K562 (cell line): ENCODE measurements at regions of chr4 and their contacts with region 1.

Region 1: GRCh38 chr4:147866532-147867271 is 134.8 kb downstream of the ARHGAP10 start:
- DNase-seq: peak; percentile 72 to 90 (median 82)
- ATAC-seq: peak; percentile 100
- H3K4me3 ChIP-seq: no peak overlapping the region
- H3K27ac ChIP-seq: no peak overlapping the region
- H3K4me1 ChIP-seq: no peaks in the 10 kb centered on the region
- H3K27me3 ChIP-seq: no peaks in the 10 kb centered on the region
- CTCF ChIP-seq: peak; percentile 98 to 100 (median 100)
- EP300 ChIP-seq: no peak
- POLR2A ChIP-seq: no peak
- RAD21 ChIP-seq: peak; percentile 92

Region 2: GRCh38 chr4:146883070-146883469 is 983.6 kb before region 1 on chr4:
- CTCF ChIA-PET with region 1: no interaction called
- POLR2A ChIA-PET with region 1: no interaction called
- in situ Hi-C with region 1: no loop called
- intact Hi-C with region 1: no loop called
- DNase-seq: no peak
- ATAC-seq: no peak
- H3K4me3 ChIP-seq: no peak overlapping the region
- H3K27ac ChIP-seq: no peak overlapping the region
- H3K4me1 ChIP-seq: no peaks in the 10 kb centered on the region
- H3K27me3 ChIP-seq: no peaks in the 10 kb centered on the region
- CTCF ChIP-seq: no peak
- EP300 ChIP-seq: no peak
- POLR2A ChIP-seq: no peak
- RAD21 ChIP-seq: no peak

Region 3: GRCh38 chr4:147019061-147019460 is 847.6 kb before region 1 on chr4:
- CTCF ChIA-PET with region 1: interaction called, 9 read pairs
- POLR2A ChIA-PET with region 1: no interaction called
- in situ Hi-C with region 1: loop called (anchors 25 kb)
- intact Hi-C with region 1: loop called (anchors 1 kb)
- DNase-seq: peak; percentile 43 to 68 (median 55)
- ATAC-seq: peak; percentile 91
- H3K4me3 ChIP-seq: no peak overlapping the region
- H3K27ac ChIP-seq: no peak overlapping the region
- H3K4me1 ChIP-seq: no peaks in the 10 kb centered on the region
- H3K27me3 ChIP-seq: no peaks in the 10 kb centered on the region
- CTCF ChIP-seq: peak; percentile 64 to 72 (median 68)
- EP300 ChIP-seq: no peak
- POLR2A ChIP-seq: no peak
- RAD21 ChIP-seq: peak; percentile 58 to 70

Region 4: GRCh38 chr4:147160908-147161513 is 705.7 kb before region 1 on chr4:
- CTCF ChIA-PET with region 1: interaction called, 7 read pairs
- POLR2A ChIA-PET with region 1: no interaction called
- in situ Hi-C with region 1: no loop called
- intact Hi-C with region 1: loop called (anchors 5 kb)
- DNase-seq: peak; percentile 43 to 53 (median 52)
- ATAC-seq: peak; percentile 88
- H3K4me3 ChIP-seq: no peak overlapping the region
- H3K27ac ChIP-seq: no peak overlapping the region
- H3K4me1 ChIP-seq: peaks cover 0 to 4% of the 10 kb centered on the region in 2 experiments; a peak in 1 of 5 replicates
- H3K27me3 ChIP-seq: peaks cover 0 to 6% of the 10 kb centered on the region in 2 experiments; a peak in 1 of 5 replicates
- CTCF ChIP-seq: peak; percentile 64 to 68 (median 64)
- EP300 ChIP-seq: no peak
- POLR2A ChIP-seq: no peak
- RAD21 ChIP-seq: peak; percentile 48 to 54

Region 5: DNA sequence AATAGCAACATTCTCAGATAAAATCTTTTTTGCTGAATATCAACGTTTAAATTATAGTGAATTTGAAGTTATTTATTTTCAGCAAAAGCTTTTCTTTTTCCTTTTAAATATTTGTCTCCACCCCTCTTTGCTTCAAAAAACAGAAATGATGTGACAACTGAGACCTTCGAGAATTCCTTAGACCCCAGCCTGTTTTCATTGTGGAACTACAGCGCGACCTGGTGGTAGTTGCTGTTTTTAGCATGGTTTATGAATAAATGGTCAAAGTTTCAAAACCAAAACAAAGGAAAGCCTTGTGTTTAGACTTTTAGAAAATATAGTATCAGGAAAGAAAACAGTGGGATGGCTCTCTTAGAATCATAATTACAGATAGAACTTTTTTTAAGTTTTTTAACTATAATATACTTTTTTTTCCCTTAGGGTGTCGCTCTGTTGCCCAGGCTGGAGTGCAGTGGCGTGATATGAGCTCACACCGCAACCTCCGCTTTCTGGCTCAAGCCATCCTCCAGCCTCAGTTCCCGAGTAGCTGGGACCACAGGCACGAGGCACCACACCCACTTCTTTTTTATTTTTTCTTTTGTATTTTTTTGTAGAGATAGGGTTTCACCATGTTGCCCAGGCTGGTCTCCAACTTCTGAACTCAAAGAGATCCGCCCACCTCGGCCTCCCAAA is 276.3 kb before region 1 on chr4:
- CTCF ChIA-PET with region 1: no interaction called
- POLR2A ChIA-PET with region 1: no interaction called
- in situ Hi-C with region 1: no loop called
- intact Hi-C with region 1: loop called (anchors 2 kb)
- DNase-seq: peak; percentile 43 to 61 (median 48)
- ATAC-seq: peak; percentile 87
- H3K4me3 ChIP-seq: no peak overlapping the region
- H3K27ac ChIP-seq: no peak overlapping the region
- H3K4me1 ChIP-seq: no peaks in the 10 kb centered on the region
- H3K27me3 ChIP-seq: no peaks in the 10 kb centered on the region
- CTCF ChIP-seq: peak; percentile 63 to 80 (median 70)
- EP300 ChIP-seq: no peak
- POLR2A ChIP-seq: no peak
- RAD21 ChIP-seq: peak; percentile 74 to 83

Region 6: GRCh38 chr4:147707865-147708672 is 158.6 kb before region 1 on chr4:
- CTCF ChIA-PET with region 1: interaction called, 11 read pairs
- POLR2A ChIA-PET with region 1: no interaction called
- in situ Hi-C with region 1: no loop called
- intact Hi-C with region 1: loop called (anchors 1 kb)
- DNase-seq: peak; percentile 19 to 46 (median 41)
- ATAC-seq: peak; percentile 86
- H3K4me3 ChIP-seq: no peak overlapping the region
- H3K27ac ChIP-seq: no peak overlapping the region
- H3K4me1 ChIP-seq: no peaks in the 10 kb centered on the region
- H3K27me3 ChIP-seq: no peaks in the 10 kb centered on the region
- CTCF ChIP-seq: peak; percentile 59 to 81 (median 75)
- EP300 ChIP-seq: no peak
- POLR2A ChIP-seq: no peak
- RAD21 ChIP-seq: peak; percentile 29 to 58; a peak in 2 of 4 replicates

Region 7: DNA sequence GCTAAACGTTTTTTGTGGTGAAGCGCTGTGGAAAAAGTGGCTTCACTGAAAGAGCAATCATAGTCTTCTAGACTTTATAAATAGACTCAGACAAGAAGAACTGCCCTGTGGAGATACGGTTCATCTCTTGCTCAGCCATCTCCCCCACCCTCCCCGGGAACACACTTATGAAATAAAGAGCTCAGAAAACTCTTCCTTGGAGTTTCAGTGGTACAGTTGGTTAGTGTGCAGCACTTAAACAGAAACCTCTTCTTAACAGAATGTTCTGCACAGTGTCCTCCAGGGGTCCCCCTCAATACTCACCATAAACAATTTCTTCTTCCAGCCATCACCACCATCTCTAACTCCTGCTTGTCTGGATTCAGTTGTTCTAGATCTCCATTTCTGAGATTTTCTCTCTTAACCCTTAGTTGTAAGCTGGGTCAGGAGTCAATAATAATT is 178.2 kb after region 1 on chr4:
- CTCF ChIA-PET with region 1: no interaction called
- POLR2A ChIA-PET with region 1: no interaction called
- in situ Hi-C with region 1: no loop called
- intact Hi-C with region 1: no loop called
- DNase-seq: peak in 2 of 4 experiments; percentile 6 to 11
- ATAC-seq: peak; percentile 73
- H3K4me3 ChIP-seq: no peak overlapping the region
- H3K27ac ChIP-seq: no peak overlapping the region
- H3K4me1 ChIP-seq: no peaks in the 10 kb centered on the region
- H3K27me3 ChIP-seq: no peaks in the 10 kb centered on the region
- CTCF ChIP-seq: peak in 1 of 3 experiments; percentile 31; a peak in 2 of 6 replicates
- EP300 ChIP-seq: no peak
- POLR2A ChIP-seq: no peak
- RAD21 ChIP-seq: no peak